Aorta (tissue), 5 donors: ENCODE measurements at regions of chr12 and their contacts with region 1.

Region 1: GRCh38 chr12:14854586-14855183 is 11.4 kb upstream of the ART4 start:
- DNase-seq: no peak
- ATAC-seq: peak; percentile 62
- H3K4me3 ChIP-seq: no peak overlapping the region
- H3K27ac ChIP-seq: no peak overlapping the region
- H3K4me1 ChIP-seq: peaks cover 0 to 3% of the 10 kb centered on the region in 2 donors
- H3K27me3 ChIP-seq: no peaks in the 10 kb centered on the region

Region 2: GRCh38 chr12:14111230-14111865 is 743.3 kb before region 1 on chr12:
- intact Hi-C with region 1: no loop called
- DNase-seq: no peak
- ATAC-seq: no peak
- H3K4me3 ChIP-seq: no peak overlapping the region
- H3K27ac ChIP-seq: no peak overlapping the region
- H3K4me1 ChIP-seq: no peaks in the 10 kb centered on the region
- H3K27me3 ChIP-seq: no peaks in the 10 kb centered on the region

Region 3: GRCh38 chr12:15131431-15131830 is 276.7 kb after region 1 on chr12:
- intact Hi-C with region 1: loop called in 1 of 2 experiments (anchors 5 kb)
- DNase-seq: no peak
- ATAC-seq: peak; percentile 76
- H3K4me3 ChIP-seq: no peak overlapping the region
- H3K27ac ChIP-seq: no peak overlapping the region
- H3K4me1 ChIP-seq: peaks cover 0 to 1% of the 10 kb centered on the region in 2 donors
- H3K27me3 ChIP-seq: no peaks in the 10 kb centered on the region

Region 4: GRCh38 chr12:15179672-15180071 is 325.0 kb after region 1 on chr12:
- intact Hi-C with region 1: no loop called
- DNase-seq: no peak
- ATAC-seq: no peak
- H3K4me3 ChIP-seq: no peak overlapping the region
- H3K27ac ChIP-seq: no peak overlapping the region
- H3K4me1 ChIP-seq: peaks cover 8 to 13% of the 10 kb centered on the region in 2 donors
- H3K27me3 ChIP-seq: no peaks in the 10 kb centered on the region

Region 5: DNA sequence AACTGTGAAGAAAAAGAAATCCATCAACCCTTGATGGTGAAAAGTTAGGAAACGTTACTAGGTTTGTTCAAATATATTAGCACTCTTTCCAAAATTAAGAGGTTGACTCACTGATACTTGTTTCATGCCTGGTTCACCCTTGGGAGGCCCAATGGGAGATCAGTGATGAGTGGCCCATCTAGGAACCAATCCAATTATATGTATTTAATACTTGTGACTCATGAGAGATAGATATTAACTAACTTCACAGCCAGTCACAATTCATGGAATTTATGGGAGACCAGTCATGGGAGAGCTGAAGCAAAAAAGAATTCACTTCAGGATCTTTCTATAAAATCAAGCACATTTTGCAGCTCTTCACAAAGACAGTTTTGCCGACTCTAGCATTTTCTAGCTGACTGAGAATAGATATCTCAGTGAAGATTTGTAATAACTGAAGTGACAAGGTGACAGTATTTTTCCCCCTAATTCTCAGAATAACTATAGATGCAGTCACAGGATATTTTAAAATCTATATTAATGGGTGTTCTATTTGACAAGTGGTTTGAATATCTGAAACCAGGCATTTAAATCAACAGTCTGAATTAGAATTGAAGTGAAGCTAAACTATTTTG is 704.3 kb after region 1 on chr12:
- intact Hi-C with region 1: no loop called
- DNase-seq: no peak
- ATAC-seq: no peak
- H3K4me3 ChIP-seq: no peak overlapping the region
- H3K27ac ChIP-seq: no peak overlapping the region
- H3K4me1 ChIP-seq: peaks cover 3 to 6% of the 10 kb centered on the region in 2 donors
- H3K27me3 ChIP-seq: no peaks in the 10 kb centered on the region